Psoas muscle (tissue), 8 donors: ENCODE measurements at regions of chr4 and their contacts with region 1.

Region 1: GRCh38 chr4:56410235-56411062 is 23.2 kb upstream of the AASDH start:
- DNase-seq: no peak
- ATAC-seq: peak in 3 of 4 donors; percentile 48 to 65 (median 64)
- H3K4me3 ChIP-seq: peak overlapping the region; percentile 35
- H3K27ac ChIP-seq: no peak overlapping the region
- H3K4me1 ChIP-seq: peaks cover 7% of the 10 kb centered on the region
- H3K27me3 ChIP-seq: no peaks in the 10 kb centered on the region
- CTCF ChIP-seq: no peak

Region 2: GRCh38 chr4:56387023-56388001 is 23.1 kb before region 1 on chr4 and contains the start of gene AASDH:
- intact Hi-C with region 1: loop called in 1 of 2 experiments (anchors 2 kb)
- DNase-seq: peak; percentile 91 to 95
- ATAC-seq: peak; percentile 96 to 98 (median 97)
- H3K4me3 ChIP-seq: peak within 1 kb of the TSS; percentile 76
- H3K27ac ChIP-seq: peak within 1 kb of the TSS; percentile 92
- H3K4me1 ChIP-seq: peaks cover 22% of the 10 kb centered on the region
- H3K27me3 ChIP-seq: no peaks in the 10 kb centered on the region
- CTCF ChIP-seq: no peak
- total RNA-seq, gene AASDH: 4.5 to 6.9 (median 5.9) TPM